CD4-positive, alpha-beta T cell (primary cell): ENCODE measurements at regions of chr4 and their contacts with region 1.

Region 1: GRCh38 chr4:103091601-103092223 is 7.9 kb downstream of the BDH2 start:
- DNase-seq: peak in 10 of 14 experiments; percentile 4 to 80 (median 32)
- ATAC-seq: peak; percentile 68
- H3K4me3 ChIP-seq: no peak overlapping the region
- H3K4me3 Mint-ChIP-seq: no peak overlapping the region
- H3K27ac ChIP-seq: no peak overlapping the region
- H3K27ac Mint-ChIP-seq: no peak overlapping the region
- H3K4me1 ChIP-seq: no peaks in the 10 kb centered on the region
- H3K4me1 Mint-ChIP-seq: peaks cover 15% of the 10 kb centered on the region
- H3K27me3 ChIP-seq: no peaks in the 10 kb centered on the region
- H3K27me3 Mint-ChIP-seq: no peaks in the 10 kb centered on the region
- CTCF ChIP-seq: peak; percentile 71

Region 2: DNA sequence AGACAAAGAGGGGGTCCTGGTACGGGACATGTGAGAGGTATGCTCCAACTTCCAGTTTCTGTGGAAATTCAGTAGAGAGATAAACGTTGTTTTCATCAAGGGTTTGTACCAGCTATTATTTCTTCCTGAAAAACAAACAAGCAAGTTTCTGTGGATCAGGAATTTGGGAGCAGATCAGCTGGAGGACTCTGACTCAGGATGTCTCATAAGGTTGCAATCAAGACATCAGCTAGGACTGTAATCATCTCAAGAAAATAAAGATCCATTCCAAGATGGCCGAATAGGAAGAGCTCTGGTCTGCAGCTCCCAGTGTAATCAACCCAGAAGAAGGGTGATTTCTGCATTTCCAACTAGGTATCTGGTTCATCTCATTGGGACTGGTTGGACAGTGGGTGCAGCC is 614.1 kb before region 1 on chr4:
- CTCF ChIA-PET with region 1: no interaction called
- POLR2A ChIA-PET with region 1: no interaction called
- intact Hi-C with region 1: no loop called
- DNase-seq: no peak
- ATAC-seq: no peak
- H3K4me3 ChIP-seq: no peak overlapping the region
- H3K4me3 Mint-ChIP-seq: no peak overlapping the region
- H3K27ac ChIP-seq: no peak overlapping the region
- H3K27ac Mint-ChIP-seq: no peak overlapping the region
- H3K4me1 ChIP-seq: no peaks in the 10 kb centered on the region
- H3K4me1 Mint-ChIP-seq: peaks cover 6% of the 10 kb centered on the region
- H3K27me3 ChIP-seq: no peaks in the 10 kb centered on the region
- H3K27me3 Mint-ChIP-seq: no peaks in the 10 kb centered on the region
- CTCF ChIP-seq: no peak

Region 3: DNA sequence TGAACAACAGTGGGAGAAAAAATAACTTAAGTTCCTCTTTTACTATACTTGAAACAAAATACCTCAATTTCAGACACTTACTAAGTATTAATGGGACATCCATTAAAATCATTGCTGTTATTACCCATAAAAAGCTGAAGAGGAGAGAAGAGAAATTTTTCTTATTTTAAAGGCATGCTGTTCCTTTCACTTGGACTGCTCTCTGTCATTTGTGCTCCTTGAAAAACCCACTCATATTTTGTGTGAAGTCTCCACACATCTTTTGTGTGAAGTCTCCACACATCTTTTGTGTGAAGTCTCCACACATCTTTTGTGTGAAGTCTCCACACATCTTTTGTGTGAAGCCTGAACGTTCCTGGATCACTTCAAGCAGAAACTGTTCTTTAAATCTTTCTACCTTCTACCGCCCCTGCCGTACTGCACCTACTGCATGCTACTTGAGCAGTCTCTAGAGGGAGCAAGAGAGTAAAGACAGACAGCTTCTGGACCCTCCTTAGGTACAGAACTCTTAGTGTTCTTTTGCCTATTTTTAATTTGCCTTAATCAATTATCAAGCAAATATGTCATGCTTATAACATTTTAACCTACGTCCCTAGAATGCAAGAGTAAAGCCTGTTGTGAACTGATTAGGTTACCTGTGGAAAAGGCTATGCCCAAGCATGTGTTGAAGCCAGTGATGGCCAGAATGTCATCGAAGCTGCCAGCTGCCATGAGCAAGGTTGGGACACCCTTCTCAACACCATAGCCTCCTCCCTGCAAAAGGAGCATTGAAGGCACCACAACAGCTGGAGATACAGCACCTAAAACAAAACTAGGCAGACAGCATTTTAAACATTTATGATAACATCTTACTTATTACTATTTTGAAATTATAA is 45.1 kb before region 1 on chr4:
- CTCF ChIA-PET with region 1: interaction called, 5 read pairs
- POLR2A ChIA-PET with region 1: interaction called, 3 read pairs
- intact Hi-C with region 1: loop called (anchors 1 to 2 kb)
- DNase-seq: peak in 12 of 14 experiments; percentile 7 to 73 (median 14)
- ATAC-seq: peak; percentile 100
- H3K4me3 ChIP-seq: no peak overlapping the region
- H3K4me3 Mint-ChIP-seq: no peak overlapping the region
- H3K27ac ChIP-seq: no peak overlapping the region
- H3K27ac Mint-ChIP-seq: no peak overlapping the region
- H3K4me1 ChIP-seq: no peaks in the 10 kb centered on the region
- H3K4me1 Mint-ChIP-seq: no peaks in the 10 kb centered on the region
- H3K27me3 ChIP-seq: no peaks in the 10 kb centered on the region
- H3K27me3 Mint-ChIP-seq: no peaks in the 10 kb centered on the region
- CTCF ChIP-seq: peak; percentile 76

Region 4: GRCh38 chr4:103171006-103171405 is 79.3 kb after region 1 on chr4:
- CTCF ChIA-PET with region 1: no interaction called
- POLR2A ChIA-PET with region 1: no interaction called
- intact Hi-C with region 1: no loop called
- DNase-seq: no peak
- ATAC-seq: no peak
- H3K4me3 ChIP-seq: no peak overlapping the region
- H3K4me3 Mint-ChIP-seq: no peak overlapping the region
- H3K27ac ChIP-seq: no peak overlapping the region
- H3K27ac Mint-ChIP-seq: no peak overlapping the region
- H3K4me1 ChIP-seq: no peaks in the 10 kb centered on the region
- H3K4me1 Mint-ChIP-seq: no peaks in the 10 kb centered on the region
- H3K27me3 ChIP-seq: no peaks in the 10 kb centered on the region
- H3K27me3 Mint-ChIP-seq: no peaks in the 10 kb centered on the region
- CTCF ChIP-seq: no peak